ENCODE measurements at regions of chr20 and their contacts with region 1.

Region 1: DNA sequence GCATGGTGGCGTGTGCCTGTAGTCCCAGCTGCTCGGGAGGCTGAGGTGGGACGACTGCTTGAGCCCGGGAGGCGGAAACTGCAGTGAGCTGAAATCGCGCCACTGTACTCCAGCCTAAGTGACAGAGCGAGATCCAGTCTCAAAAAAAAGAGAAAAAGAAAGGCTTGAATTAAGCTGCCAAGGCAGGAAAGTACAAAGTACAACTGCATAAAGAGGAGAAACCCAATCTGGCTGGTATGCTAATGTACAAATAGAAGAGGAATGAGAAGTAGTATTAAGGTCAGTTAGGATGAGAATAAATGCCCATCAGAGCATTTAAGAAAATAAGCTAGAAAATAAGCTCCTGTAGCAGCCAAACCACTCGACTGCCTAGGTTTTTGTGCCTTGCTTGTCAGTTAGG is 23.1 kb upstream of the RPN2 start:
- DNase-seq: no peak
- H3K4me3 ChIP-seq: no peak overlapping the region
- H3K27ac ChIP-seq: no peak overlapping the region
- H3K4me1 ChIP-seq: no peaks in the 10 kb centered on the region
- H3K27me3 ChIP-seq: no peaks in the 10 kb centered on the region
- CTCF ChIP-seq: no peak

Region 2: GRCh38 chr20:37066168-37066567 is 89.8 kb before region 1 on chr20:
- CTCF ChIA-PET with region 1: no interaction called
- POLR2A ChIA-PET with region 1: no interaction called
- intact Hi-C with region 1: no loop called
- DNase-seq: no peak
- H3K4me3 ChIP-seq: no peak overlapping the region
- H3K27ac ChIP-seq: no peak overlapping the region
- H3K4me1 ChIP-seq: no peaks in the 10 kb centered on the region
- H3K27me3 ChIP-seq: no peaks in the 10 kb centered on the region
- CTCF ChIP-seq: no peak

Region 3: GRCh38 chr20:37128803-37129202 is 27.2 kb before region 1 on chr20:
- CTCF ChIA-PET with region 1: no interaction called
- POLR2A ChIA-PET with region 1: interaction called, 15 read pairs
- intact Hi-C with region 1: no loop called
- DNase-seq: no peak
- H3K4me3 ChIP-seq: no peak overlapping the region
- H3K27ac ChIP-seq: no peak overlapping the region
- H3K4me1 ChIP-seq: no peaks in the 10 kb centered on the region
- H3K27me3 ChIP-seq: no peaks in the 10 kb centered on the region; the same call in 1 of the 2 replicates
- CTCF ChIP-seq: no peak